CD8-positive, alpha-beta T cell (primary cell): ENCODE measurements at regions of chr14 and their contacts with region 1.

Region 1: GRCh38 chr14:89416002-89416995 is 734 bp downstream of the FOXN3 start:
- DNase-seq: peak; percentile 97 to 100 (median 99)
- ATAC-seq: peak; percentile 71
- H3K4me3 ChIP-seq: peak overlapping the region; percentile 85 to 92
- H3K4me3 Mint-ChIP-seq: peak overlapping the region; percentile 94
- H3K27ac ChIP-seq: peak overlapping the region; percentile 75 to 77
- H3K27ac Mint-ChIP-seq: peak overlapping the region; percentile 93
- H3K4me1 ChIP-seq: peaks cover 30% of the 10 kb centered on the region
- H3K4me1 Mint-ChIP-seq: peaks cover 57% of the 10 kb centered on the region
- H3K27me3 ChIP-seq: no peaks in the 10 kb centered on the region
- H3K27me3 Mint-ChIP-seq: no peaks in the 10 kb centered on the region
- CTCF ChIP-seq: no peak

Region 2: DNA sequence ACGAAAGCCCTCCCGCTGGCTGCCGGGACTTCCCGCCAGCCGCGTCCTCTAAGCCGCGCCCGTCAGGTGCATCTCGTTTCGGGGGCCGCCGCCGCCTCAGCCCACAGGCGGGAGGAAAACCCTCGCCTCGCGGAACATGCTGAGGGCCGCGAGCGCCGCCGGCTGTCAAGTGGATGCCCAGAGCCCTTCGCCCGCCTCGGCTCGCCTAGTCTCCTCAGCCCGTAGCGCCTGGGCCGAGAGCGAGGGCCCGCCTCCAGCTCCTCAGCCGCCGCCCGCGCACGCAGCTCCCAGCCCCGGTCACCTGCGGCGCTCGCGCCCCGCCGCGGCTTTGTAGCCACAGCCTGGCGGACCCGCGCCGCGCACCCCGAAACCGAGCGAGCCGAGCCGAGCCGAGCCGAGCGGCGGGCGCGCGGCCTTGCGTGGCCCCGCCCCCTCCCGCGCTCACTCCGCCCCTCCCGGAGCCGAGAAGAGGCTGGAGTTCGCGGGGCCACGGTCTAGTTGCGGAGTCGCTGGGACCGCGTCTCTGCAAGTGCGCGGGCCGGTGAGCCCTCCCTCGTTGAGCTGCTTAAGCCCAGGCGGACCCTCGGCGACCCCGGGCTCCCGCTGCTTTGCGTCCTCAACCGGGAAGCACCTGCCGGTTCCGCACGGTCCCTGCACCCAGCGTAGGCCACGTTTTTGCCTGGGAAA is 623.6 kb before region 1 on chr14 and contains the start of gene EML5:
- CTCF ChIA-PET with region 1: no interaction called
- POLR2A ChIA-PET with region 1: no interaction called
- intact Hi-C with region 1: loop called in 1 of 2 experiments (anchors 10 kb)
- DNase-seq: peak; percentile 64 to 90 (median 81)
- ATAC-seq: peak; percentile 86
- H3K4me3 ChIP-seq: peak within 1 kb of the TSS; percentile 72 to 86
- H3K4me3 Mint-ChIP-seq: peak within 1 kb of the TSS; percentile 93
- H3K27ac ChIP-seq: peak within 1 kb of the TSS; percentile 53
- H3K27ac Mint-ChIP-seq: peak within 1 kb of the TSS; percentile 80
- H3K4me1 ChIP-seq: peaks cover 9% of the 10 kb centered on the region
- H3K4me1 Mint-ChIP-seq: peaks cover 22% of the 10 kb centered on the region
- H3K27me3 ChIP-seq: no peaks in the 10 kb centered on the region
- H3K27me3 Mint-ChIP-seq: no peaks in the 10 kb centered on the region
- CTCF ChIP-seq: peak; percentile 15
- total RNA-seq, gene EML5: 2.5 to 3.5 TPM

Region 3: GRCh38 chr14:89303457-89304435 is 112.6 kb before region 1 on chr14:
- CTCF ChIA-PET with region 1: no interaction called
- POLR2A ChIA-PET with region 1: no interaction called
- intact Hi-C with region 1: loop called in 1 of 2 experiments (anchors 10 kb)
- DNase-seq: peak in 4 of 9 experiments; percentile 13 to 57 (median 24)
- ATAC-seq: peak; percentile 72
- H3K4me3 ChIP-seq: peak overlapping the region in 1 of 2 experiments; percentile 14
- H3K4me3 Mint-ChIP-seq: peak overlapping the region; percentile 57
- H3K27ac ChIP-seq: peak overlapping the region; percentile 24 to 66
- H3K27ac Mint-ChIP-seq: peak overlapping the region; percentile 94
- H3K4me1 ChIP-seq: peaks cover 33% of the 10 kb centered on the region
- H3K4me1 Mint-ChIP-seq: peaks cover 76% of the 10 kb centered on the region
- H3K27me3 ChIP-seq: no peaks in the 10 kb centered on the region
- H3K27me3 Mint-ChIP-seq: no peaks in the 10 kb centered on the region
- CTCF ChIP-seq: no peak

Region 4: GRCh38 chr14:89466484-89466883 is 50.2 kb after region 1 on chr14:
- CTCF ChIA-PET with region 1: interaction called, 4 read pairs
- POLR2A ChIA-PET with region 1: no interaction called
- intact Hi-C with region 1: loop called in 1 of 2 experiments (anchors 5 kb)
- DNase-seq: peak; percentile 15 to 87 (median 54)
- ATAC-seq: peak; percentile 95
- H3K4me3 ChIP-seq: peak overlapping the region; percentile 14 to 24
- H3K4me3 Mint-ChIP-seq: peak overlapping the region; percentile 59
- H3K27ac ChIP-seq: peak overlapping the region in 1 of 2 experiments; percentile 63
- H3K27ac Mint-ChIP-seq: peak overlapping the region; percentile 88
- H3K4me1 ChIP-seq: peaks cover 36% of the 10 kb centered on the region
- H3K4me1 Mint-ChIP-seq: peaks cover 64% of the 10 kb centered on the region
- H3K27me3 ChIP-seq: no peaks in the 10 kb centered on the region
- H3K27me3 Mint-ChIP-seq: no peaks in the 10 kb centered on the region
- CTCF ChIP-seq: no peak

Region 5: DNA sequence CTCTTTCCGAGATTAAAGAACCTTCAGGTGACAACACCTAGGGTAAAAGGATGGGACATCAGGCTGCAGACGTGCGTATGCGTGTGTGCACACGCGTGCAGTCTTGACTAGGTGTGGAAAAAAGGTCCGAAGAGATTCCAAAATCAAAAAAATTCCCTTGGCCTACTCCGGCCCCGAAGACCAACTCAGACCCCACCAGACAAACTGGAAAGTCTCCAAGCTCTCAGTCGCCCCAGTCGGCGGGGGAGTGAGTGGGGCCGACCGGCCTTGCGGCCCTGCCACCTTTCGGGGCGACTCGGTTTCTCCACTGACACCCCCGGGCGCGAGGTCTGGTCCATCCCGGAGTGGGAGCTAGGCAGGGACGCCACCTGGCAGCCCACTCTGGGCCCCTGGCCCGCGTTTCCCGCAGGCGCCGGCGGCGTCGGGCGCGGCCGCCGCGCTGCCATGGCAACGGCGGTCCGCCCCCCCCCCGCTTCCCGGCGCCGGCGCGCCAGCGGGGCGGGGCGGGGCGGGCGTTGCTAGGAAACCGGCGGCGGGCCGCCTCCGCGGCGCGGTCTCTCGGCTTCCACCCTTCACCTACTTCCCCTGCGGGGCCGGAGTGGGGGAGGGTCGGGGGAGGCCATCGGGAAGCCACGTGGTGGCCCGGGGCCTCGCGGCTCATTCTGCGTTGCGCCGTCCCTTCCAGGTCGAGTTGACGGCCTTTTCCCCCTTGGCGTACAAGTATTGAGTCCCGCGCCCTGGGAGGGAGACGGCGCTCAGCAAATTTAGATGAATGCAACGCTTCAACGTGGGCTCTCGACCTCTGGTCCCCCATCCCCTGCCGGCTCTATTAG is 285.1 kb after region 1 on chr14:
- CTCF ChIA-PET with region 1: interaction called, 3 read pairs
- POLR2A ChIA-PET with region 1: no interaction called
- intact Hi-C with region 1: loop called (anchors 1 to 5 kb)
- DNase-seq: peak; percentile 66 to 90 (median 82)
- ATAC-seq: peak; percentile 84
- H3K4me3 ChIP-seq: peak overlapping the region; percentile 56 to 69
- H3K4me3 Mint-ChIP-seq: peak overlapping the region; percentile 86
- H3K27ac ChIP-seq: peak overlapping the region; percentile 57 to 62
- H3K27ac Mint-ChIP-seq: peak overlapping the region; percentile 88
- H3K4me1 ChIP-seq: peaks cover 27% of the 10 kb centered on the region
- H3K4me1 Mint-ChIP-seq: peaks cover 53% of the 10 kb centered on the region
- H3K27me3 ChIP-seq: no peaks in the 10 kb centered on the region
- H3K27me3 Mint-ChIP-seq: no peaks in the 10 kb centered on the region
- CTCF ChIP-seq: no peak

Region 6: DNA sequence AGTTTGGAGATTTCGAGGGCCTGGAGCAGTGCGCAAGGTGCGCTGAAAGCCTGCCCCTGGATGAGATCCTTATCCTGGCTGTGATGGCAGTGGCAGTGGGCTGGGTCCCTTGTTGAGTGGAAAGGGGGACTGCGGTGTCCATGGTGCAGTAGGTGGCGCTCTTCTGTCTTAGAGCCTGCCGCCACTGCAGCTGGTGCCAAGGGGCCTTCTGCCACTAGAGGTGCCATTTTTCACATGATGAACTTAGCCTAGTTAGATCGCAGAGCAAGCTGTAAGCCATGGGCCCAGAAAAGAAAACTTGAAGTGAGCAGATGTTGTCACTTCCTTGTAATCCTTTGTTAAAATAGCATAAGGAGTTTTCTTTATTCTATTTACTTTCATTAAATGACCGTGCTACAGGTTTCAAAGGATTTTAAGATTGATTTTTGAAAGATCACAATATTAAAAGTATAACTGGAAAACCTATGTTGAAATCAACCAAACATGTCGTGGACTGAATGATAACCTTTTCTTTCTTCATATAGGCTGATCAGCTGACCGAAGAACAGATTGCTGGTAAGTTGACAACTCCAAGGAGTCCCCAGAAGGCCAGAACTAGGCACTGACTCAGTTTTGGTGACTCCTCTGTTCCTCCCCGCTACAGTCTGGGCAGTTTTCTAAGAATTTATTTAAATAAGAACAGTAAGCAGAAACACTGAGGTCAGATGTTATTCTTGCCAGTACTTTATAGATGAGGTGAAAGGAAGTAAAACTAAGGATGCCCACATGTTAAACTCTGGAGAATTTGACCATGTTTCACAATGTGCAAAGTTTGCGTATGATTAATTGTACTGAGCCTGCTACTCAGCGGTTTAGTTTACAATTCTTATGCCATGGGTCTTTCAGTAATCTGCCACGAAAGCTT is 983.5 kb after region 1 on chr14:
- CTCF ChIA-PET with region 1: no interaction called
- POLR2A ChIA-PET with region 1: no interaction called
- intact Hi-C with region 1: loop called in 1 of 2 experiments (anchors 5 kb)
- DNase-seq: peak; percentile 73 to 95 (median 85)
- ATAC-seq: peak; percentile 47
- H3K4me3 ChIP-seq: peak overlapping the region; percentile 59 to 75
- H3K4me3 Mint-ChIP-seq: peak overlapping the region; percentile 99
- H3K27ac ChIP-seq: peak overlapping the region; percentile 89
- H3K27ac Mint-ChIP-seq: peak overlapping the region; percentile 99
- H3K4me1 ChIP-seq: peaks cover 56% of the 10 kb centered on the region
- H3K4me1 Mint-ChIP-seq: peaks cover 60% of the 10 kb centered on the region
- H3K27me3 ChIP-seq: no peaks in the 10 kb centered on the region
- H3K27me3 Mint-ChIP-seq: no peaks in the 10 kb centered on the region
- CTCF ChIP-seq: peak; percentile 100